ENCODE measurements at regions of chr22 and their contacts with region 1.

Region 1: DNA sequence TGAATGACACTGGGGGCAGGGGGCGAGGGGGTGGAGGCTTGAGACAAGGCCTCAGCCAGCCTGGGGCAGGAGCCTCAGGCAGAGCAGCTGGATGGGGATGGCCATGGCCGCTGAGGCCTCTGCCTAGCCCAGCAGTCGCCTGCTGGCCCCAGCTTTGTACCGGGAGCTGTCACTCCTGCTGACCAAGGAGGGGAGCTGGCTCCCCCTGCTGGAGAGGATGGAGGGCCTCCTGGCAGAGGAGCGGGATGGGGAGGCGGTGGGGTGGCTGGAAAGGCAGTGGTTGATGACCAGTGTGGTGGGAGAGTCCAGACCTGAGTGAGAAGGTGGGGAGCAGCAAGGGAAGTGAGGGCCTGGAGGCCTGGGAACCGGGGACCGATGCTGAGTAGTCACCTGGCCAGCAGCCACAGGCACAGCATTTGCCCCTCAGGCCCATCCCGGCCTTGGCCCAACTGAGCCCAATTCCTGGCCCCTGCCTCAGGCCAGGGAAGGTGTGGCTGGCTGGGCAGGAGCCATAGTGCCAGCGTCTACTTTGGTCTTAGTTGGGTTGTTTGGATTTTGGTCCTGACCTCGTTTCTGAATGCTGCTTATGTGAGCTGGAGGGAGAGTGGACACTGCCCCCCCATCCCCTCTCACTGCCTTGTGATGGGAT is 6.0 kb upstream of the SUSD2 start:
- DNase-seq: no peak
- H3K4me3 ChIP-seq: no peak overlapping the region
- H3K27me3 ChIP-seq: no peaks in the 10 kb centered on the region
- CTCF ChIP-seq: peak; percentile 96

Region 2: GRCh38 chr22:24106385-24107381 is 68.6 kb before region 1 on chr22:
- CTCF ChIA-PET with region 1: interaction called, 49 read pairs
- POLR2A ChIA-PET with region 1: no interaction called
- DNase-seq: no peak
- H3K4me3 ChIP-seq: no peak overlapping the region
- H3K27me3 ChIP-seq: no peaks in the 10 kb centered on the region
- CTCF ChIP-seq: peak; percentile 27; the same call in 1 of the 2 replicates

Region 3: GRCh38 chr22:24133187-24133965 is 41.9 kb before region 1 on chr22:
- CTCF ChIA-PET with region 1: interaction called, 15 read pairs
- POLR2A ChIA-PET with region 1: no interaction called
- DNase-seq: no peak
- H3K4me3 ChIP-seq: no peak overlapping the region
- H3K27me3 ChIP-seq: no peaks in the 10 kb centered on the region
- CTCF ChIP-seq: peak; percentile 42

Region 4: DNA sequence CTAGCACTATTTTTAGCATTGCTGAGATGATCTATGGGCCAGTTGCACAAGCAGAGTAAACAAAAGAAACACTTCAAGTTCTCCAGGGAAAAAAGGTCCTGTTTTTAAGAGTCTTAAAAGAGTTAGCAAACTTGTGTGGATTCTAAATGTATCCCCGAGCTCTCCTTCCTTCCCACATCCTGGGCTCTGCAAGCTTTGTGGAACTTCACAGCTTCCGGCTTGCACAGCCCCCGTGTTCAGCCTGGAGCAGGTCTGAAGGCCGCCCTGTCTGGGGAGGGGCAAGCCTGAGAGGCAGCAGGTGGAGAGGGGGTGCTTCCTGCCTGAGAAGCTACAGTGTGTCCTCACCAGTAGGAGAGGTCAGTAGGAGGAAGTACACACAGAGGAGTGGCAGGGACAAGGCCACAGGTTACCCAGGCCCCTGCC is 29.1 kb before region 1 on chr22:
- CTCF ChIA-PET with region 1: interaction called, 10 read pairs
- POLR2A ChIA-PET with region 1: no interaction called
- DNase-seq: peak; percentile 50
- H3K4me3 ChIP-seq: no peak overlapping the region
- H3K27me3 ChIP-seq: no peaks in the 10 kb centered on the region
- CTCF ChIP-seq: no peak

Measured in BJ (cell line).